Left ventricle myocardium superior (tissue), 1 donor: ENCODE measurements at regions of chr18 and their contacts with region 1.

Region 1: DNA sequence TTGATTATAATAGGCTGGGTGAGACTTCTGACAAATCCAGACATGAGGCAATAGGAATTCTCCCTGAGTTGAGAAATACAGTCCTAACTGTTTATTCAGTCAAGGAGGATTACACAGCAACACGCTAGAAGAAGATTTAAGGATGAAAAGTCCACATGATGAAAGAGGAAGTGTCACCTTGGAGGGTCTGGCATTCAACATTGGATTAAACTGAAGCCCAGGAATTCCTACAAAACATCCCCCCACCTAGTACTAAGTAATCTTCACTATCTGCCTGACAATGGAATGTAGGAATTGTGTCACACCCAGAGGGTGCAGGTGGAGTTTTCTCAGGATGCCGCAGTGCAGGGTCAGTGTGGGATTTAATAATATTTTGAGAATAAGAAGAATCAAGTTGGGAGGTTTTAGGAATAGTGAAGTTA is 142.4 kb downstream of the SOCS6 start:
- DNase-seq: no peak
- ATAC-seq: no peak

Region 2: DNA sequence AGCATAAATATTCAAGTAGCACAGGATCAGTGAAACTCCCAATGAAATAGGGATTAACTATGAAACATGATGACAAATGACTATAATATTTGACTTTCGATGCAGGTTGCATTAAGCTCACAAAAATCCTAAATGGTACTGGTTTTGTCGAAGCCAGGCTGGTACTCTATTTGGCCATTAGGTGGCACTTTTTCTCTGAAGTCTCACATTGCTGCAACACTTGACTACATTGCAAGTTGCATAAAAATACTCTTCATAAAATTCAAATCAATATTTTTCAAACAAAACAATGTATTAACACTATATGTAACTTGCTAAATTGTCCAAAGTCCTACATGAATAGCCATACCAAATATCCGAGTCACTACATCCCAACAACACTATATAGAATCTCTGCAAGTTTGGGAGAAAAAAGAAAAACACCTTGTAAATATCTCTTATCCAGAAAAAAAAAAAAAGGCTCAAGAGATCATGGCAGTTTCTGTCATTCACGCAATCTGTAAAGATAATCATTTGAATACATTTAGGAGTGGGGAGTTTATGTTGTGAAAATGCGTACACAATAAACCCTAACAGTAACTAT is 235.3 kb before region 1 on chr18:
- intact Hi-C with region 1: loop called (anchors 5 kb)
- DNase-seq: no peak
- ATAC-seq: peak; percentile 84

Region 3: DNA sequence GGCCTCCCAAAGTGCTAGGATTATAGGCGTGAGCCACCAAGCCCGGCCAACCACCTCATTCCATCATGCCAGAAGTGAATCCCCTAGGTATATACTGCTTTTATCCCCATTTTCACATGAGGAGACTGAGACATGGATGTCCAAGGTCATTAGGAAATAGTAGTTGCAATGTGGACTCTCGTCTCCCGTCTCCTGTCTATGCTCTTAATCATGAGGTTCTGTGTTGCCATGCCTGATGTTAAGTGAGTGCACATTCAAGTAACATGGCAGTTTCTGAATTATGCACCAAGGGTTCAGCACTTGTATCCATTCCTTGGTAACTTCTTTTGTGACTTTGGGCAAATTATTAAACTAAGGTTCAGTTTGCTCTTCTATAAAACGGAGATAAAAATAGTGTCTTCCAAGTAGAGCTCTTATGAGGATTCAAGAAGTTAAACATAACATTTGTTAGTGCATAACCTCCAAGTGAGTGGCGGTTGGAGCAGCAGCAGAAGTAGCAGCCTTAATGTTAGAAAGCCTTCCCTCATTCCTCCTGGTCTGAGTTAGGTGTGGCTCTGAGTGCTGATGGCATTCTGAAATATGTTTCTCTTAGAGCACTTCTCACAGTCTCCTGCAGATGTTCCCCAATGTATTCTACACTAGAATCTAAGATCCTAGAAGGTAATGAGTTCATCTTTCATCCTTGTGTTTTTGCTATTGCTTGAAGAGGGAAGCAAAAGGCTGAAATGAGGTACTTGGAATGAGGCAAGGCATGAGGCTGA is 120.5 kb before region 1 on chr18:
- intact Hi-C with region 1: loop called (anchors 10 kb)
- DNase-seq: no peak
- ATAC-seq: peak; percentile 31

Region 4: GRCh38 chr18:71826789-71827188 is 1395.6 kb after region 1 on chr18:
- intact Hi-C with region 1: no loop called
- DNase-seq: no peak
- ATAC-seq: no peak